Transverse colon (tissue), 4 donors: ENCODE measurements at regions of chr19 and their contacts with region 1.

Region 1: GRCh38 chr19:52322429-52322828 is 13.6 kb upstream of the ZNF610 start:
- DNase-seq: no peak
- H3K4me3 ChIP-seq: no peak overlapping the region
- H3K27ac ChIP-seq: no peak overlapping the region
- H3K4me1 ChIP-seq: no peaks in the 10 kb centered on the region
- H3K27me3 ChIP-seq: no peaks in the 10 kb centered on the region
- CTCF ChIP-seq: no peak
- EP300 ChIP-seq: no peak
- POLR2A ChIP-seq: no peak

Region 2: GRCh38 chr19:52307275-52307674 is 15.2 kb before region 1 on chr19:
- in situ Hi-C with region 1: no loop called
- intact Hi-C with region 1: loop called (anchors 1 kb)
- DNase-seq: no peak
- H3K4me3 ChIP-seq: no peak overlapping the region
- H3K27ac ChIP-seq: no peak overlapping the region
- H3K4me1 ChIP-seq: no peaks in the 10 kb centered on the region
- H3K27me3 ChIP-seq: no peaks in the 10 kb centered on the region
- CTCF ChIP-seq: no peak
- EP300 ChIP-seq: no peak
- POLR2A ChIP-seq: no peak